ENCODE measurements at regions of chr2 and their contacts with region 1.

Region 1: GRCh38 chr2:75676464-75676863 is 29.9 kb downstream of the MRPL19 start:
- DNase-seq: no peak
- ATAC-seq: no peak

Region 2: DNA sequence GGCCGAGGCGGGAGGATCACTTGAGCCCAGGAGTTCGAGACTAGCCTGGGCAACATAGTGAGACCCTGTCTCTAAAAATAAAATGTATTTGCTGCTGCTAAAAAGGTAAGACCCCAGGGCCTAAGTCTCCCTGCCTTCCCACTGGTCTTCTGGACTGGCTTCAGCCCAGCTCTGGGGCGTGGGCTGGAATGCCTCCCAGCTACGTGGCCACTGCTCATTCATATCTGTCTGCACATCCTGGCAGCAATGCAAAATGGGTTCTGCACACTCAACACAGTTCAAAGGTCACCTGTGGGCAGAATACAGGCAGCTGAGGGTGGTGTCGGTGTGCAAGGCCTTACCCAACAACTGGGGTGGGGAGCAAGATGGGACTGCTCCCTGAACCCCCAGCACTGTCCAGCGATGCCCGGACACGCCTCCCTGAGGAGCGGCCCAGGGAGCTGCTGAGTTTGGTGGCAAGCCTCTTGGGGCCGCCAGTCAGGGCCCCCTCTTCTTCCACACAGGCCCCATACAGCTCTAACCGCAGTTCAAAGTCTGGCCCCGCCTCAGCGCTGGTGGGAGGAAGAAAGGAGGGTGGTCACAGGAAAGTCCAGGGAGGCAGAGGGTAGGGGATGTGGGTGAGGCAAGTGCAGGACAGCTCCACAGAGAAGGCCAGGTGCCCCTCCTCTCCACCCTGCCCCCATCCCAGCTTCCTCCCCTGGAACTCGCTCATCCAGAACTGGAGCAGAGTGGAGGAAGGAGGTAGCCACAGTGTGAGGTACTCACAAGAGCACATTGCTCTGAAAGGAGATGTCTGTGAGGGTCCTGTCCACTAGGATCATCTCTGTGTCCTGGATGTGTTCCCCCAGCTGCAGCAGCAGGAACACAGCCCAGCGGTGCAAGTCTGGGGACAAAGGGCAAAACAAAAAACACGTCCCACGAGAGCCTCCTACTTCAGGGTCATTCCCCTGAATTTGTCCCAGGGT is 1246.7 kb before region 1 on chr2:
- intact Hi-C with region 1: no loop called
- DNase-seq: no peak
- ATAC-seq: no peak

Region 3: DNA sequence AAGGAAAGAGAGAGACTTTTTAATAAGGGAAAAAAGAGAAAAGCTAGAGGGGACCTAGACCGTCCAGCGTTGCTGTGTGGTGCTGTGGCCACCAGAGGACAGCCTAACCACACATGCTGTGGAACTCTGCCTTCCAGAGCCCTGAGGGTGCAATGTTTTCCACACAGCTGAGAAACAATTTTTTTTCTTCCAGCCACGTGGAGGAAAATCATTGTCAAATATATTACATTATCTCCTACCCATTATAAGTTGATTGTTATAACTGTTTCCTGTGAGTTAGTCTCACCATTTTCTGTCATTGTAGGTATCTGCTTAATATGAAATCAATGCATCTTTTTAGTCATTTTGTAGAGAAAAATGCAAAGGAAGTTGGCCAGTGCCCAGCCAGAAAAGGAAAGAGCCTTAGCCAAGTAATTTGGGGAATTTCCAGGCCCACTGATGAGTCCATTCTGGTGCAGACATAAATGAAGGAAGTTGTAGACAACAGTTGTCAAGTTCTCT is 35.8 kb before region 1 on chr2:
- intact Hi-C with region 1: loop called in 1 of 2 experiments (anchors 5 kb)
- DNase-seq: peak; percentile 71
- ATAC-seq: peak; percentile 95 to 98

Measured in left cardiac atrium (tissue), 4 donors.